Psoas muscle (tissue), 8 donors: ENCODE measurements at regions of chr3 and their contacts with region 1.

Region 1: DNA sequence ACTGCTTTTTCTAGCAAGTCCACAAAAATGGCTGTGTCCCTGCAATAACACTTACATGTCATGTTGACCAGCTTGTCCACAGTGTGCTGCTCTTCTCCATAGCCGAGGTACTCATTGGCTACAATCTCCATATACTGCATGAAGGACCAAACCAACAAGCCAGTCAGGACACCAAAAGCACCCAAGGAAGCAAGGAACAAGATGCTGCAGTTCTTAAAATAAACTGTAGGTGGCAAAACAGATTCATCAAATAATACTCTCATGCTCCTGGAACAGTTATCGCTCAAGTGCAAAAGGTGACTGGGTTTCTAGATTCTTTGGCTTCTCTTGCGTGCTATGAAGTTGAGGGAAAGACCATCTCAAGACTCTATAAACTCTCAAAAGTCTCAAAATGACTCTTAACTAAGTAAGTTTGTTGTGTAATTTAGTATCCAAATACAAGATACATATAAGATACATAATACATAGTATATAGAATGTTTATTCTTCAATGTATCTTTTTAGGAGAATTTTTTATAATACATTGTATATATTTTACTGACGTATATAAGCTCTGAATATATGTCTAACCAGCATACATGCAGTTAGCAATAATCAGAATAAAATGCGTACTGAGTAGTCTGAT is 57.0 kb downstream of the NEK10 start:
- DNase-seq: no peak
- ATAC-seq: peak; percentile 73 to 90 (median 80)
- H3K4me3 ChIP-seq: no peak overlapping the region
- H3K27ac ChIP-seq: no peak overlapping the region
- H3K4me1 ChIP-seq: peaks cover 5% of the 10 kb centered on the region
- H3K27me3 ChIP-seq: no peaks in the 10 kb centered on the region
- CTCF ChIP-seq: peak; percentile 87

Region 2: DNA sequence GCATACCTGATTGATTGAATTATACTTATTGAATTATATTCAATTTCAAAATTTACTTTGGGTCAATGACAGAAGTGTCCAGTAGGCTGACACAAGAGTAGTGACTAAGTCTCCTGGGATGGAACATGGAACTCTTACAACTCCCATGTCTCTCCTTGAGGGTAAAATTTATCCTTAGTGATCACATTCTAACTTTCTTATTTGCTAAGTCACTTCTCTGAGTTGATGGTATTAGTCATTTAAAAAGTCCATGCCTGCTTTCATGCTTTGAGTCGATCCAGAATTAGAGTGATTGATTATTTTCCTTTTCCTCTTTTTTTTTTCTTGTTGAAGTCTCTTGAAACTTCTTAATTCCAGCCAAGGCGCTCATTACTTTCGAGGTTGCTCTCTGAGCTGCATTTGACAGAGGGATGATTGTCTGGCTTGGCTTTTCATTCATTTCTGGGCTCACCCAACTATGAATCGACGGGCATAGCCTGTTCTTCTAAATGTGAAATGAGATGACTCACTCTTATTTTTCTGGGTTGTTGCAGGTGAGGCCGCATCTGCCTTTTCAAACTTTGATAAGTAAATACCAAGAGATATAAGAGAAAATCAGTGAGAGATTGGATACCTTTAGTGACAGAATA is 654.7 kb before region 1 on chr3:
- intact Hi-C with region 1: no loop called
- DNase-seq: no peak
- ATAC-seq: no peak
- H3K4me3 ChIP-seq: no peak overlapping the region
- H3K27ac ChIP-seq: no peak overlapping the region
- H3K4me1 ChIP-seq: peaks cover 32% of the 10 kb centered on the region
- H3K27me3 ChIP-seq: no peaks in the 10 kb centered on the region
- CTCF ChIP-seq: no peak

Region 3: GRCh38 chr3:27360113-27361078 is 48.2 kb after region 1 on chr3:
- intact Hi-C with region 1: loop called in 1 of 2 experiments (anchors 5 kb)
- DNase-seq: no peak
- ATAC-seq: no peak
- H3K4me3 ChIP-seq: no peak overlapping the region
- H3K27ac ChIP-seq: no peak overlapping the region
- H3K4me1 ChIP-seq: no peaks in the 10 kb centered on the region
- H3K27me3 ChIP-seq: no peaks in the 10 kb centered on the region
- CTCF ChIP-seq: no peak

Region 4: GRCh38 chr3:27467545-27467944 is 155.4 kb after region 1 on chr3:
- intact Hi-C with region 1: loop called (anchors 2 to 5 kb)
- DNase-seq: no peak
- ATAC-seq: peak; percentile 56 to 91 (median 76)
- H3K4me3 ChIP-seq: peak overlapping the region; percentile 37
- H3K27ac ChIP-seq: peak overlapping the region; percentile 31
- H3K4me1 ChIP-seq: peaks cover 12% of the 10 kb centered on the region
- H3K27me3 ChIP-seq: no peaks in the 10 kb centered on the region
- CTCF ChIP-seq: peak; percentile 60

Region 5: GRCh38 chr3:27681245-27681748 is 369.1 kb after region 1 on chr3:
- intact Hi-C with region 1: loop called (anchors 5 to 10 kb)
- DNase-seq: no peak
- ATAC-seq: peak; percentile 54 to 79 (median 64)
- H3K4me3 ChIP-seq: no peak overlapping the region
- H3K27ac ChIP-seq: no peak overlapping the region
- H3K4me1 ChIP-seq: no peaks in the 10 kb centered on the region
- H3K27me3 ChIP-seq: no peaks in the 10 kb centered on the region
- CTCF ChIP-seq: peak; percentile 58